OCI-LY7 (cell line): ENCODE measurements at regions of chr21 and their contacts with region 1.

Region 1: GRCh38 chr21:34073032-34073869 is at the starts of genes MRPS6 and SLC5A3:
- DNase-seq: peak; percentile 90
- H3K4me3 ChIP-seq: peak within 1 kb of the TSS; percentile 90
- H3K27ac ChIP-seq: peak within 1 kb of the TSS; percentile 43
- H3K4me1 ChIP-seq: peaks cover 41% of the 10 kb centered on the region
- CTCF ChIP-seq: no peak
- total RNA-seq, gene MRPS6: 15.2 and 20.9 TPM in 2 replicates
- total RNA-seq, gene SLC5A3: 26.3 and 31.5 TPM in 2 replicates

Region 2: GRCh38 chr21:33641336-33642026 is 431.8 kb before region 1 on chr21 and contains the start of gene CRYZL1:
- CTCF ChIA-PET with region 1: no interaction called
- POLR2A ChIA-PET with region 1: no interaction called
- intact Hi-C with region 1: loop called (anchors 5 kb)
- DNase-seq: peak; percentile 100
- H3K4me3 ChIP-seq: peak within 1 kb of the TSS; percentile 83
- H3K27ac ChIP-seq: peak within 1 kb of the TSS; percentile 55
- H3K4me1 ChIP-seq: peaks cover 15% of the 10 kb centered on the region
- CTCF ChIP-seq: no peak
- total RNA-seq, gene CRYZL1: 19.8 and 26.4 TPM in 2 replicates

Region 3: GRCh38 chr21:34614633-34615486 is 541.6 kb after region 1 on chr21 and contains the start of gene RCAN1:
- CTCF ChIA-PET with region 1: no interaction called
- POLR2A ChIA-PET with region 1: no interaction called
- intact Hi-C with region 1: no loop called
- DNase-seq: peak; percentile 95
- H3K4me3 ChIP-seq: peak within 1 kb of the TSS; percentile 77
- H3K27ac ChIP-seq: no peak within 1 kb of the TSS
- H3K4me1 ChIP-seq: peaks cover 23% of the 10 kb centered on the region
- CTCF ChIP-seq: no peak
- total RNA-seq, gene RCAN1: 2.8 and 6.8 TPM in 2 replicates